ENCODE measurements at regions of chr7 and their contacts with region 1.

Region 1: GRCh38 chr7:25777969-25778708 is 373.9 kb upstream of the NFE2L3 start:
- DNase-seq: peak in 1 of 2 donors; percentile 61
- ATAC-seq: peak; percentile 34 to 90 (median 67)
- H3K4me3 ChIP-seq: peak overlapping the region; percentile 10
- H3K27ac ChIP-seq: peak overlapping the region; percentile 75
- H3K4me1 ChIP-seq: peaks cover 39% of the 10 kb centered on the region
- H3K27me3 ChIP-seq: no peaks in the 10 kb centered on the region
- CTCF ChIP-seq: no peak

Region 2: DNA sequence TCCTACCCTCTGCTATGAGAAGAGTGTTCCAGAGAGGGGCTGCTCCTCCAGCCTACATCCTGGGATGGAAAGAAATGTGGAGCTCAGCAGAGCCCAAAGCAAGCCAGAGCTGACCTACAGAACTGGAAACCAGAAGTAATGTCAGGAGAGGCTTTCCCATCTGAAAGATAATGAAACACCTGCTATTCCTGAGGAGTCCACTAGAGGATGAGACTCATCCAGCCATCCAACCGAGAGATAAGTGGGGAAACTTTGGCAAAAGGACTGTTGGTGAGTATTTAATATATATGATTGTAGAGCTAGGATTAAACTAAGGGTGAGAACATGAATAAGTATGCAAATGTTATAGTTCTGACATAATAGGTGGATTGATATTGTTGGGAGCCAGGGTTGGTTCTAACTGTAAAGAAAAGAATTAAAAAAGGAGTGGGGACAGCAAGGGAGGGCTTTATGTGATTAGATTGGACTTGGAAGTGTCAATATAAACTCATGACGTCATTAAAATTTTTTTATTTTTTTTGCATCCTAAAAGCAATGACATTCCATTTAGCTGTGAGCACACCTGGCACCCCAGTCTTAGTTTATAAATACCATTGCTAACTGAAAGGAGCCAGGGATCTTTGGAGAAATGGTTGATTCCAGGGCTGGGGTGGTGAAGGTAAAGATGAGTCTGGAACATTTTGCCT is 61.1 kb after region 1 on chr7:
- intact Hi-C with region 1: loop called in 1 of 2 experiments (anchors 5 kb)
- DNase-seq: no peak
- ATAC-seq: no peak
- H3K4me3 ChIP-seq: no peak overlapping the region
- H3K27ac ChIP-seq: no peak overlapping the region
- H3K4me1 ChIP-seq: peaks cover 43% of the 10 kb centered on the region
- H3K27me3 ChIP-seq: no peaks in the 10 kb centered on the region
- CTCF ChIP-seq: peak; percentile 23

Measured in psoas muscle (tissue), 8 donors.